Activated T-helper 2 cell treated with anti-CD3 and anti-CD28 coated beads, Interferon-gamma antibody, Interleukin-2, Interleukin-4, amounts not matched to agents 10 μg/mL and 5 μg/mL and 100 μg/mL, durations not matched to agents 14 hours and 24 hours and 36 hours (primary cell): ENCODE measurements at regions of chr2 and their contacts with region 1.

Region 1: GRCh38 chr2:8152392-8153257 is 529.2 kb upstream of the ID2 start:
- DNase-seq: no peak
- H3K4me3 Mint-ChIP-seq: no peak overlapping the region
- H3K27ac Mint-ChIP-seq: no peak overlapping the region
- H3K4me1 Mint-ChIP-seq: peaks cover 42% of the 10 kb centered on the region
- H3K27me3 Mint-ChIP-seq: no peaks in the 10 kb centered on the region

Region 2: GRCh38 chr2:7758073-7758759 is 394.4 kb before region 1 on chr2:
- intact Hi-C with region 1: loop called (anchors 10 kb)
- DNase-seq: no peak
- H3K4me3 Mint-ChIP-seq: no peak overlapping the region
- H3K27ac Mint-ChIP-seq: peak overlapping the region; percentile 78
- H3K4me1 Mint-ChIP-seq: peaks cover 18% of the 10 kb centered on the region
- H3K27me3 Mint-ChIP-seq: no peaks in the 10 kb centered on the region

Region 3: GRCh38 chr2:8049851-8050571 is 102.6 kb before region 1 on chr2:
- intact Hi-C with region 1: loop called (anchors 1 kb)
- DNase-seq: peak; percentile 63
- H3K4me3 Mint-ChIP-seq: peak overlapping the region; percentile 30
- H3K27ac Mint-ChIP-seq: peak overlapping the region; percentile 86
- H3K4me1 Mint-ChIP-seq: peaks cover 53% of the 10 kb centered on the region
- H3K27me3 Mint-ChIP-seq: no peaks in the 10 kb centered on the region

Region 4: DNA sequence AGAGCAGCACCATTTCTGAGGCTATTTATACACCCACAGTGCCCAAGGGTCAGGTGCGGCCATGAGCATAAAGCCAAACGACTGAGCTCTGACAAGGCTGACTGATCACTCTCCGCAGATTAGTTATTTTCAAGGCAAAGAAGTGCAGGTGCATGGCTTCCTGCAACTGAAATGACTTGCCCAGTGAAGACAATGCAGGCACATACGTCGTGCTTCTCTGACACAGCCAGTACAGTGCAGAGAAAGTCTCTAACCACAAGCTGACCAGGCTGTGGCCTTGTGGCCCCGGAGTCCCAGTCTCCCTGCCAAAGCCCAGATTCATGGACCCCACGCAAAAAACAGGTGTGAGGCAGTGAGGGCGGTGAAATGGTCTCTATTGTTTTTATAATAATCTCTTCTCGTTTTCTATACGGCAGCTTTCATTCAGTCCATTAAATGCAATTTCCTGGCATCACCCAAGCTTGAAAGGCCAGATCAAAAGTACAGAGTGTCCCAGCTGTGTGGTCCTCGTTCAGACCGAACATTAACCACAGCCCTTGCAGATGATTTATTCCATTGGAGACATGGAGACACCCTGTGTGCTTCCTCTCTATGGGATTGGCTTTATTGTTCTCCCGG is 82.2 kb after region 1 on chr2:
- intact Hi-C with region 1: loop called (anchors 2 kb)
- DNase-seq: no peak
- H3K4me3 Mint-ChIP-seq: no peak overlapping the region
- H3K27ac Mint-ChIP-seq: no peak overlapping the region
- H3K4me1 Mint-ChIP-seq: peaks cover 34% of the 10 kb centered on the region
- H3K27me3 Mint-ChIP-seq: peaks cover 4% of the 10 kb centered on the region

Region 5: GRCh38 chr2:8303322-8303832 is 150.8 kb after region 1 on chr2:
- intact Hi-C with region 1: loop called (anchors 2 kb)
- DNase-seq: peak; percentile 82
- H3K4me3 Mint-ChIP-seq: peak overlapping the region; percentile 49
- H3K27ac Mint-ChIP-seq: peak overlapping the region; percentile 47
- H3K4me1 Mint-ChIP-seq: peaks cover 81% of the 10 kb centered on the region
- H3K27me3 Mint-ChIP-seq: no peaks in the 10 kb centered on the region